ENCODE measurements at regions of chr16 and their contacts with region 1.

Region 1: DNA sequence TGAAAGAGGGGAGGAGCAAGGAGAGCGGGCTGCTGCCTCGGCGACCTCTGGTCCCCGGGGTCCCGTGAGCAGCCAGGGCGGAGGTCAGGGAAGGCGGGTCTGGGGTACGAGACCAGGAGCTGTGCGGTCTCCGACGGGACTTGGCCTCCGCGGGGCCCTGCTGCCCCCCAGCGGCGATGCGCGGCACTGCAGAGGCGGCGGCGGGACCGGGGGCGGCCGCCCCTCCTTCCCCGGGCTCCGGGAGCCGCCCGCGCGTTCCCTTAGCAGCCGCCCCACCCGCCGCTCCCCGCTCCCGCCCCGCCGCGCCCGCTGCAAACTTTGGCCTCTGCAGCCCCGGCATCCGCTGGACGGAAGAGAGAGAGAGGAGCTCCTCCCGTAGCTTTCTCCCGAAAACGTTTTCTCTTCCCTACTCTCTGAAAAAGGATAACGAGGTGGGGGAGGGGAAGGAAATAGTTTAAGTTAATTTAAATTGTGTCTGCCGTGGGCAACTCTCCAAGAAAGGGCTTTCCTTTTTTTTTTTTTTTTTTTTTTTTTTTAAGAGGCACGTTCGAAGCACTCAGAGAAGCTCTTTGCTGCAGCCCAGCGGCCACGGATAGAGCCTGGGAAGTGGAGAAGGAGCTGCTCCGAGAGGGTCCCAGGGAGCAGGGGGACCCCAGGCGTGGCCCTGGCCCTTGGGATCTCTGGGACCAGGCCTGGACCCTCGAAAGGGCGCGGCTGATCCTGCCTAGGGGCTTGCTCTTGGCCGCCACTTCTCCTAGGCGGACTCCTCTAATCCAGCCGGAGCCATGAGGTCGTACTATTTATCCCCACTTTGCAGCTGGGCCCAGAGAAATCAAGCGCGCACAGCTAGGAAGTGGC is 43.2 kb downstream of the C16orf82 start:
- DNase-seq: peak; percentile 88
- CTCF ChIP-seq: peak; percentile 98

Region 2: GRCh38 chr16:26913851-26914250 is 196.0 kb before region 1 on chr16:
- CTCF ChIA-PET with region 1: no interaction called
- POLR2A ChIA-PET with region 1: no interaction called
- DNase-seq: no peak
- CTCF ChIP-seq: no peak

Region 3: DNA sequence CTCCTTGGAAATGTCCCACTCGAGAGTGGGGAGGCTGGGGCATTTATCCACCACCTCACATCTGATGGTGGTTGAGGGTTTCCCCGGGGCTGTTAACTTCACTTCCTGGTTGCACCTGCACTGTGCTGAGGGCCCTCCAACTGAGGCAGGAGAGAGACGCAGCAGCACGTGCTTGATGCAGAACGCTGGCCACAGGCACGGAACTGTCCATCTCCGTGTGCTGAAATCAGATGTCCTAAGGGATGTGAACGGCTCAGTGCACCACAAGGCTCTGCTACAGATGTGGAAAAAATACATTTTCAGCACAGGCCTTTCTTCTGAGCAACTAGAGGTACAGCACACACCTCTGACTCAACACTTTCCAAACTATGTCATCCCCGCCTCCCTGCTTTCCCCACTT is 157.9 kb before region 1 on chr16:
- CTCF ChIA-PET with region 1: no interaction called
- POLR2A ChIA-PET with region 1: no interaction called
- DNase-seq: no peak
- CTCF ChIP-seq: no peak

Region 4: DNA sequence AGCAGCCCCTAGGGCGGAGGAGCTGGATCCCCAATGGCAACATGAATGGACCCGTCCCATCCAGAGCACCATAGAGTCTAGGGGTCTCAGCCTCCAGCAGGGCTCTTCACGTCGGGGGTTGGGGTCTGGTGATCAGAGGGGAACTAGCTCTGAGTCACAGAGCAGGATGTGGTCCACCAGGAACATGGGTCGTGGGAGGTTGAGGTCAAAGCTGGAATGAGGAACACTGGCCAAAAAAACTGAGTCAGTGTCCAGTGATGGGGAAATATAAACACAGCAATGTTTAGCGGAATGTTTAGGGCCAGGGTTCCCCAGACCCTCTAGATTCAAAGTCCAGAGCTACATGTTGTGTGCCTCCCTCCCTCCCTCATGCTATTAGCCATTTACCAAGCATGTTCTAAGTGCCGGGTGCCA is 122.3 kb before region 1 on chr16:
- CTCF ChIA-PET with region 1: no interaction called
- POLR2A ChIA-PET with region 1: interaction called, 11 read pairs
- DNase-seq: no peak
- CTCF ChIP-seq: no peak

Region 5: DNA sequence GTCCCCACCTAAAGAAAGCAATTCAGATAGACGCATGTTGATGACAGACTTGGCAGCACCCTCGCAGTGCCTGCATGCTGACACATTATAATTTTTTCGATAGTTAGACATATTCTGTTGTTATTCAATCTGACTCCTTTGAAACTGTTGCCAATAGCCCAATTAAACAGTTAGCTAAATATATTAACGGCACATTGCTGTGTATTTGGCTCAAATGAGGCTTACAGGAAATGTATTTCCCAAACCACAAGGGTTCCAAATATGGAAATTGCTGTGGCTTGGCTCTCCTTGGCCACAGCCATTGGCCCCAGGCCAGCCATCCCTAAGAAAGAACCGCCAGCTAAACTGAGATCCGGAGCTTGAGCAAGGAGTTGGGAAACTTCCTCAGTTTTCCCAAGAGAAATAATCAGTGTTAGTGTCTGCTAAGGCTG is 12.1 kb before region 1 on chr16:
- CTCF ChIA-PET with region 1: interaction called, 12 read pairs
- POLR2A ChIA-PET with region 1: no interaction called
- DNase-seq: no peak
- CTCF ChIP-seq: no peak